ENCODE measurements at regions of chr2 and their contacts with region 1.

Region 1: DNA sequence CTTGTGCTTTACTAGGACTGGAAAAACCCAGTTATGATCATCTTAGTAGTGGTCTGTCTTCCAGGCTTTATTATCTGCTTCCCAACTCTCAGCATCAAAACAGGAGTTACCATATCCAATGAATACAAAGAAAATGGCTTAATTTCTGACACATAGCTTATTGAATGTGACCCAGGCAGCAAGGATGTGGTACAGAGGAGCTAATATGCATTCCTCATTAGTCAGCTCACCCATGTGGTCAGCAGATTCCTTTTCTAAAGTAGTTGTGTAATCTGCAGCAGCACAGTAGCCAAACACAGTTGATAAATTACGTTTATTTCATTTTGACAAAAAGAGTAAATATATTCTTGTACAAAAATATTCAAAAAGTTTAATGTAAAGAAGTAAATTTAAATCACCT is 43.6 kb downstream of the TSPYL6 start:
- DNase-seq: no peak
- ATAC-seq: peak in 6 of 8 donors; percentile 31 to 83 (median 61)
- H3K4me3 ChIP-seq: no peak overlapping the region
- H3K27ac ChIP-seq: peak overlapping the region in 2 of 10 donors; percentile 13 to 31
- H3K4me1 ChIP-seq: peaks cover 2 to 29% (median 22%) of the 10 kb centered on the region in 9 donors
- H3K27me3 ChIP-seq: no peaks in the 10 kb centered on the region
- CTCF ChIP-seq: no peak

Region 2: DNA sequence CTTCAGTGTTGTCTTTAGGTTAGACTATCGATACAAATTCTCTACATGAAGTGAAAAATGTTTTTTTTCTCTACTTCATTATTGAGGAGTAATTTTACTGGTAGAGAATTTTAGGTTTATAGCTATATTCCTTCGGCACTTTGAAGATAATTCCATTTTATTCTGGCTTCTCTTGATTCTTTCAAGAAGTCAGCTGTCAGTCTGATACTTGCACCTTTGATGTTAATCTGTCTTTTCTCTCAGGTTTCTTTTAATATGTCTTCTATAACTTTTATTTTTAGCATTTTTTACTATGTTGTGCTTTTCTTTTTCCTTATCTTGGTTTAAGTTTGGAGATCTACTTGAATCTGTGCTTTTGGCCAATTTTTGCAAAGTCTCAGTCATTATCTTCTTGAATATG is 25.0 kb after region 1 on chr2:
- intact Hi-C with region 1: loop called in 1 of 10 experiments (anchors 2 kb)
- DNase-seq: no peak
- ATAC-seq: no peak
- H3K4me3 ChIP-seq: no peak overlapping the region
- H3K27ac ChIP-seq: no peak overlapping the region
- H3K4me1 ChIP-seq: peaks cover 0 to 30% (median 14%) of the 10 kb centered on the region in 9 donors
- H3K27me3 ChIP-seq: no peaks in the 10 kb centered on the region
- CTCF ChIP-seq: no peak

Region 3: GRCh38 chr2:54330162-54330925 is 117.9 kb after region 1 on chr2:
- intact Hi-C with region 1: loop called in 6 of 10 experiments (anchors 2 to 10 kb)
- DNase-seq: peak; percentile 98
- ATAC-seq: peak; percentile 98 to 99 (median 99)
- H3K4me3 ChIP-seq: peak overlapping the region; percentile 9 to 74 (median 62)
- H3K27ac ChIP-seq: peak overlapping the region; percentile 75 to 97 (median 92)
- H3K4me1 ChIP-seq: peaks cover 2 to 26% (median 19%) of the 10 kb centered on the region in 9 donors
- H3K27me3 ChIP-seq: peaks cover 0 to 7% (median 0%) of the 10 kb centered on the region in 7 donors
- CTCF ChIP-seq: no peak

Measured in heart right ventricle (tissue), 16 donors.